A549 (cell line): ENCODE measurements at regions of chr10 and their contacts with region 1.

Region 1: GRCh38 chr10:97210543-97210961 is 24.8 kb upstream of the SLIT1 start:
- DNase-seq: peak; percentile 60 to 73
- ATAC-seq: peak; percentile 69 to 89; a peak in 4 of 6 replicates
- H3K4me3 ChIP-seq: no peak overlapping the region
- H3K27ac ChIP-seq: no peak overlapping the region
- H3K4me1 ChIP-seq: no peaks in the 10 kb centered on the region
- CTCF ChIP-seq: peak; percentile 98
- EP300 ChIP-seq: no peak
- POLR2A ChIP-seq: no peak
- RAD21 ChIP-seq: peak; percentile 81 to 85

Region 2: GRCh38 chr10:97117372-97117771 is 93.2 kb before region 1 on chr10:
- CTCF ChIA-PET with region 1: interaction called, 11 read pairs
- POLR2A ChIA-PET with region 1: no interaction called
- DNase-seq: peak; percentile 24 to 42
- ATAC-seq: peak; percentile 55 to 83; a peak in 5 of 6 replicates
- H3K4me3 ChIP-seq: no peak overlapping the region
- H3K27ac ChIP-seq: no peak overlapping the region
- H3K4me1 ChIP-seq: no peaks in the 10 kb centered on the region
- CTCF ChIP-seq: peak; percentile 71
- EP300 ChIP-seq: no peak
- POLR2A ChIP-seq: no peak
- RAD21 ChIP-seq: peak; percentile 66 to 69

Region 3: GRCh38 chr10:97173036-97173435 is 37.5 kb before region 1 on chr10:
- CTCF ChIA-PET with region 1: interaction called, 27 read pairs
- POLR2A ChIA-PET with region 1: no interaction called
- DNase-seq: no peak
- ATAC-seq: no peak
- H3K4me3 ChIP-seq: no peak overlapping the region
- H3K27ac ChIP-seq: no peak overlapping the region
- H3K4me1 ChIP-seq: no peaks in the 10 kb centered on the region
- CTCF ChIP-seq: no peak
- EP300 ChIP-seq: no peak
- POLR2A ChIP-seq: no peak
- RAD21 ChIP-seq: no peak

Region 4: DNA sequence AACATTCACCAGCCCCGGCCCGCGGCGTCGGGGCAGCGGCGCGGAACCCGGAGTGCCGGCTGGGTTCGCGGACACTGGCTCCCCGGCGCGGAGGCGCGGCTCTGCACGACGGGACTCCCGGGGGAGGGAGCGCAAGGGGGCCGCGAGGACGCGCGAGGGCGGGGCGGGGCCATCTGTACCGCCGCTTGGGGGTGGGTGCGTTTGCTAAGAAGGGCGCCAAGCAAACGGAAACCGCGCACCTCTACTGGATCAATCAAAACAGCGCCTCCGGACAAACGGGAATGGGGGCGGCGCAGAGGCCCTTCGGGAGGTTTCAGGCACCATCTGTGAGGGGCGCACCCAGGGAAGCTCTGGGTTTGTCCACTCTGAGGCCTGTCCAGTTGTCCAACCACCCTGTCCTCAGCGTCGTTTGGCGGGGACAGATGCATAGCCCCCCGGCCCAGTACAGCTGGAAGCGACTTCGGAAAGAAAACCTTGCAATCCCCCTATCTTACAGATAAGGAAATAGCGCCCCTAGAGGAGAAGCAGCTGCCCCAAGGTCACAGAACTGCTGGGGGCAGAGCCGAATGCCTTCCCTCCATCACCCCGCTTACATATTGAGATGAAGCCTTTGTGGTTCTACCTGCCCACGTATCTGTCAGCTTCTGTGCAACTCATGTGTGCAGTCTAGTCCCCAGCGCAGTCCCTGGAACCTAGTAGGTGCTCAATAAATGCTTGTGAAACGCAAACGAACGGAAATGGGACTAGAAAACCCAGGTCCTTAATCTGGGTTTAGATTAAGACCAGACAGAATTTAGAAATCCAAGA is 14.1 kb before region 1 on chr10:
- CTCF ChIA-PET with region 1: interaction called, 239 read pairs
- POLR2A ChIA-PET with region 1: no interaction called
- DNase-seq: peak; percentile 67 to 78
- ATAC-seq: peak; percentile 92 to 94
- H3K4me3 ChIP-seq: peak overlapping the region; percentile 58
- H3K27ac ChIP-seq: peak overlapping the region; percentile 51 to 79; a peak in 5 of 6 replicates
- H3K4me1 ChIP-seq: no peaks in the 10 kb centered on the region
- CTCF ChIP-seq: peak; percentile 88
- EP300 ChIP-seq: no peak
- POLR2A ChIP-seq: no peak
- RAD21 ChIP-seq: peak; percentile 54 to 62

Region 5: DNA sequence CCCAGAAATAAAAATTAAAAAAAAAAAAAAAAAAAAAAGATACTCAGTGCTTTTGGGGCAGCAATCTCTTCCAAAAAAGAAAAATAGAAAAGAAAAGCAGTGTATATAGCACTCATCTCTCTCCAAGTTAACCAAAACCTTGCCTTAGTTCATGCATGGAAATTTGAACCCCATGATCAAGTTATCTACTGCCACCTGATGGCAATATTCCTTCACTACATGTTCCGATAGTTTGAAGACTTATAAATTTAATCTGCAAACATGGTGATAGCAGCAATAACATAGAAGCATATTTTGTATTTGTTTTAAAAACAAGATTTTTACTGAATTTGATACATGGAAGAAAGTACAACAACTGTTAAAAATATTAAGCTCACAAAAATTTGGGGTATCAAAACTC is 23.8 kb after region 1 on chr10:
- CTCF ChIA-PET with region 1: interaction called, 47 read pairs
- POLR2A ChIA-PET with region 1: no interaction called
- DNase-seq: peak; percentile 13 to 51
- ATAC-seq: peak; percentile 54 to 58; a peak in 3 of 6 replicates
- H3K4me3 ChIP-seq: no peak overlapping the region
- H3K27ac ChIP-seq: no peak overlapping the region
- H3K4me1 ChIP-seq: peaks cover 12% of the 10 kb centered on the region
- CTCF ChIP-seq: peak; percentile 70
- EP300 ChIP-seq: no peak
- POLR2A ChIP-seq: no peak
- RAD21 ChIP-seq: peak; percentile 71

Region 6: DNA sequence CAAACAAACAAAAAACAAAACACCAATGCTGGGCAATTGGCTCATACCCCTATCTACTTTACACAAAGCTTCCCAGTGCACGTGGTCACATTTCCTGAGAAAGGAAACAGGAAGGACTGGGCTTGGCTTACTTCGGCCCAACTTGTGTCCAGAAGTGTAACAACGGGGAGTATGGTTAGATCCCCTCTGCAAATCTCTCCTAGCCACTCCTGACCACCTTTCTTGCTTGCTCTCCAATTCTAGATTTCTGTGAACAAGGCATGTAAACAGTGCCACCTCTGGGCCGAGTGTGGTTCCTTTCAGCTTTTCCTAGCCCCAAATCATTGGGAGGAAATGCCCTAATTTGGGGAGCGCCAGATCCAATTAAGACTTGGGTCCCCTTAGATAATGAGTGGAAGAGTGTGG is 145.0 kb after region 1 on chr10:
- CTCF ChIA-PET with region 1: no interaction called
- POLR2A ChIA-PET with region 1: no interaction called
- DNase-seq: no peak
- ATAC-seq: peak in 1 of 2 experiments; percentile 30; a peak in 2 of 6 replicates
- H3K4me3 ChIP-seq: no peak overlapping the region
- H3K27ac ChIP-seq: no peak overlapping the region
- H3K4me1 ChIP-seq: no peaks in the 10 kb centered on the region
- CTCF ChIP-seq: peak; percentile 30
- EP300 ChIP-seq: no peak
- POLR2A ChIP-seq: no peak
- RAD21 ChIP-seq: peak; percentile 46 to 56; a peak in 4 of 5 replicates